ENCODE measurements at regions of chr11 and their contacts with region 1.

Region 1: GRCh38 chr11:116835791-116836631 is 1.4 kb downstream of the APOA1 start:
- DNase-seq: peak; percentile 69 to 92 (median 78)
- ATAC-seq: peak; percentile 97
- H3K4me3 ChIP-seq: peak overlapping the region; percentile 63
- H3K4me3 Mint-ChIP-seq: peak overlapping the region; percentile 84
- H3K27ac ChIP-seq: no peak overlapping the region
- H3K27ac Mint-ChIP-seq: peak overlapping the region; percentile 58
- H3K4me1 ChIP-seq: peaks cover 18% of the 10 kb centered on the region
- H3K4me1 Mint-ChIP-seq: peaks cover 12% of the 10 kb centered on the region
- H3K27me3 ChIP-seq: no peaks in the 10 kb centered on the region
- H3K27me3 Mint-ChIP-seq: no peaks in the 10 kb centered on the region
- CTCF ChIP-seq: peak; percentile 70

Region 2: DNA sequence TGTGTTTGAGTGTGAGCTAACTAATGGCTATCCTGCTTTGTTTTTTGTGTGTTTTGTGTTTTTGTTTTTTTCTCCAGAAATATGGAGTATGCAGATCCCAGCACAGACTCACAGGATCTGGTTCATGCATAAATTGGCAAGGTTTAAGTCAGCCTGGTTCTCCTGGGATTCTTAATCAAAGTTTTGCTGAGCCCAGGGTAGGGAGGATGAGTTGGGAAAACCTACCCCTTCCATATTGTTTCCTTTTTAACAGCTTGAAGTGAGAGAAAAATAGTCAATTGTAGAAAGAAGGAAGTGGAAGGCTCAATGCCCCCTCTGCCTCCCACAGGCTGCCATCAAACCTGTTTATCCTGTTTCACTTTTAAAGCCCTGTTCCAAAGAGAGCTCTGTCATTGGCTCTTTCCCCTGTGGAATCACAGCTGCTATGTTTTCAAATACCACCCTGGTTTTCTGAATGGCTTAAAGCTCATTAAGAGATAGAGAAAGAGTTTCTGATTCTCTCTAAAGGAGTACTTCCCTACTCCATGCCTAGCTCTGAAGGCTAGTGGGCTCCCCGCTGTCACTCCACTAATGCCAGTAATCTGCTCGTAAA is 1308.4 kb before region 1 on chr11:
- CTCF ChIA-PET with region 1: no interaction called
- POLR2A ChIA-PET with region 1: no interaction called
- intact Hi-C with region 1: no loop called
- DNase-seq: no peak
- ATAC-seq: no peak
- H3K4me3 ChIP-seq: no peak overlapping the region
- H3K4me3 Mint-ChIP-seq: no peak overlapping the region
- H3K27ac ChIP-seq: no peak overlapping the region
- H3K27ac Mint-ChIP-seq: no peak overlapping the region
- H3K4me1 ChIP-seq: no peaks in the 10 kb centered on the region
- H3K4me1 Mint-ChIP-seq: no peaks in the 10 kb centered on the region
- H3K27me3 ChIP-seq: no peaks in the 10 kb centered on the region
- H3K27me3 Mint-ChIP-seq: peaks cover 34% of the 10 kb centered on the region
- CTCF ChIP-seq: no peak

Region 3: DNA sequence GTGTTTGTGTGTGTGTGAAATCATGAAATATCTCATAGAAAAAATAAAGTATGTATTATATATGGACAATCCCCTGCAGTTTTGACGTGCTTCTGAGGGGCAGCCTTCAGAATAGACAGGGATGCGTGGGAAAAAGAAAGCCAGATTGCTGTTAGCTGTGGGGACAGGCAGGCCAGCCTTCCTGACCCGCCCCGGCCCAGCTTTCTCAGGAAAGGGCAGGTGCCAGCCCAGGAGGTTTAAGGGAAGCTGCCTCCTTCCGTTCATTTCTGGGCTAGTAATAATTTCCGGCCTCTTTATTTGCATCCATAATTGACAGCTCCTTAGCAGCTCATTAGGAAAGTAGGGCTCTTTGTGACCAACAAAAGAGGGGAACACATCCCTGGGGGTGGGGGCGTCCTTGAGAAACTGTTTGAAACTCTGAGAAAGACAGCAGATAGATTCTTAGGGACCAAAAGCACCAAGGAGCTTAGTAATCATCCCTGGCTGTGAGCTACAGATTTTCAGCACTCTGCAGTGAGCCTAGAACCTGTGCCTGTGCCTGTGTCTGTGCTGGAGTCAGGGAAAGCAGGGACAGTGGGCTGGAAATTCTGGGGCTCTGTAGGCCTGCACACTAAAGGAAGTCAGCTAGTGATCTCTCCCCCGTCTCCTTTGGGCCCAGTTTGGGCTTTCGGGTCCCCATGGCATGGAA is 698.9 kb before region 1 on chr11:
- CTCF ChIA-PET with region 1: no interaction called
- POLR2A ChIA-PET with region 1: no interaction called
- intact Hi-C with region 1: no loop called
- DNase-seq: no peak
- ATAC-seq: no peak
- H3K4me3 ChIP-seq: no peak overlapping the region
- H3K4me3 Mint-ChIP-seq: no peak overlapping the region
- H3K27ac ChIP-seq: no peak overlapping the region
- H3K27ac Mint-ChIP-seq: no peak overlapping the region
- H3K4me1 ChIP-seq: no peaks in the 10 kb centered on the region
- H3K4me1 Mint-ChIP-seq: no peaks in the 10 kb centered on the region
- H3K27me3 ChIP-seq: peaks cover 0 to 2% of the 10 kb centered on the region in 2 experiments
- H3K27me3 Mint-ChIP-seq: peaks cover 37% of the 10 kb centered on the region
- CTCF ChIP-seq: no peak

Region 4: DNA sequence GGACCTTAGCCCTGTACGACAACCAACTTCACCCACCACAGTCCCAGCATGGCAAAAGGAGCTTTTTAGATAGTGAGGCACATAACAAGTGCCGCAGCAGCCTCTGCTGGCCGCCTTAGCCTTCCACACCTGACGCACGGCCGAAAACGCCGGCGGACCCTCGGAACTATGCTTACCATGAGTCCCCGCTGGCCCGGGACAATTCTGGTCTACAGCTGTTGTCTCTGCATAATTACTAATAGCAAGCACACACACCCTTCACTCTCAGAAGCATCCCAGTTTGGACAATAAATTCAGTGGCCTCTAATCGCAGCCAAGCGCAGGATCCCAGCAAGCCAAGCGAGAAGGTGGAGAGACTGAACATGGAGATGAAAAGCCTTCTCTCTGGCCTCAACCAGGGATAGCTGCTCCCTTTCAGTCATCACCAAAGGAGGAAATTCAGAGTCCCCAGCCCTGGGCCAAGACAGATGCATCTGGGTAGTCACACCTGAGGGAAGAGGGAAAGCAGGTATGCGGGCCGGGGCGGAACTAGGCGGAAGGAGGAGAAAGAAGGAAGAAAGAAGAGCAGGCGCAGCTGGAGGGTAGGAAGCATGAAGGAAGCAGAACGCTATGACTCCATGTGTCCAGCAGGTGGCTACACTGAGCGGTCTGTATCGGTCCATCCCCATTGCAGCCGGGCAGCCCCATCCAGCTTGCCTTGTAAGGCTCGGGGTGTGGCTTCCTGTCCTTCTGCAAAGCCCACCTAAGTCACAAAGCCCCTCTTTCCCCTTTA is 103.6 kb before region 1 on chr11:
- CTCF ChIA-PET with region 1: interaction called, 6 read pairs
- POLR2A ChIA-PET with region 1: interaction called, 4 read pairs
- intact Hi-C with region 1: loop called in 1 of 2 experiments (anchors 5 kb)
- DNase-seq: peak; percentile 33 to 76 (median 45)
- ATAC-seq: peak; percentile 95
- H3K4me3 ChIP-seq: no peak overlapping the region
- H3K4me3 Mint-ChIP-seq: no peak overlapping the region
- H3K27ac ChIP-seq: no peak overlapping the region
- H3K27ac Mint-ChIP-seq: no peak overlapping the region
- H3K4me1 ChIP-seq: peaks cover 7% of the 10 kb centered on the region
- H3K4me1 Mint-ChIP-seq: peaks cover 7% of the 10 kb centered on the region
- H3K27me3 ChIP-seq: peaks cover 0 to 2% of the 10 kb centered on the region in 2 experiments
- H3K27me3 Mint-ChIP-seq: no peaks in the 10 kb centered on the region
- CTCF ChIP-seq: peak; percentile 83

Region 5: GRCh38 chr11:116772443-116773202 is 63.4 kb before region 1 on chr11 and contains the start of gene BUD13:
- CTCF ChIA-PET with region 1: interaction called, 5 read pairs
- POLR2A ChIA-PET with region 1: interaction called, 13 read pairs
- intact Hi-C with region 1: no loop called
- DNase-seq: peak; percentile 90 to 96 (median 94)
- ATAC-seq: peak; percentile 92
- H3K4me3 ChIP-seq: peak within 1 kb of the TSS; percentile 92
- H3K4me3 Mint-ChIP-seq: peak within 1 kb of the TSS; percentile 99
- H3K27ac ChIP-seq: peak within 1 kb of the TSS; percentile 87 to 90
- H3K27ac Mint-ChIP-seq: peak within 1 kb of the TSS; percentile 95
- H3K4me1 ChIP-seq: peaks cover 23% of the 10 kb centered on the region
- H3K4me1 Mint-ChIP-seq: peaks cover 45% of the 10 kb centered on the region
- H3K27me3 ChIP-seq: no peaks in the 10 kb centered on the region
- H3K27me3 Mint-ChIP-seq: no peaks in the 10 kb centered on the region
- CTCF ChIP-seq: peak; percentile 16
- total RNA-seq, gene BUD13: 9.2 to 10.1 TPM

Region 6: GRCh38 chr11:116853461-116854073 is 17.6 kb after region 1 on chr11:
- CTCF ChIA-PET with region 1: interaction called, 9 read pairs
- POLR2A ChIA-PET with region 1: interaction called, 76 read pairs
- intact Hi-C with region 1: loop called in 1 of 2 experiments (anchors 2 kb)
- DNase-seq: peak in 12 of 14 experiments; percentile 15 to 93 (median 52)
- ATAC-seq: peak; percentile 95
- H3K4me3 ChIP-seq: peak overlapping the region; percentile 13
- H3K4me3 Mint-ChIP-seq: peak overlapping the region; percentile 18
- H3K27ac ChIP-seq: peak overlapping the region; percentile 69 to 82
- H3K27ac Mint-ChIP-seq: peak overlapping the region; percentile 82
- H3K4me1 ChIP-seq: peaks cover 68% of the 10 kb centered on the region
- H3K4me1 Mint-ChIP-seq: peaks cover 74% of the 10 kb centered on the region
- H3K27me3 ChIP-seq: no peaks in the 10 kb centered on the region
- H3K27me3 Mint-ChIP-seq: no peaks in the 10 kb centered on the region
- CTCF ChIP-seq: no peak

Region 7: DNA sequence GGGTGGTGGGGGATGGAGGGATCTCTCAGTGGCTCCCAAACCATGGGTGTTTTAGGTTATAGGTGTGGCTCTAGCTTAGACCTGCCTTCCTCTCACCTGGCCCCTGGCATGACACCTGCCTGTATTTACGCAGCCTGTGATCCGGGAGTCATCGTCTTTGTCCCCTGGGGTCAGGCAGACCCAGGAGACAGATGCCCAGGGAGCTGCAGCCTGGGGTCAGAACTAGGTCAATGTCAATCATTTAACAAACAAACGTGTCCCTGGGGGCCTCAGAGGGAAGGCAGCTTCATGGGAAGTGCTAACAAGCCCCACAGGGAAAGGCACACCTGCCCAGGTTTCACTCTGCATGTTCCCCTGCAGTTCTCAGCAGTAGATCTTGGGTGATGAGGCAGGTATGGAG is 467.1 kb after region 1 on chr11:
- CTCF ChIA-PET with region 1: no interaction called
- POLR2A ChIA-PET with region 1: no interaction called
- intact Hi-C with region 1: no loop called
- DNase-seq: no peak
- ATAC-seq: no peak
- H3K4me3 ChIP-seq: no peak overlapping the region
- H3K4me3 Mint-ChIP-seq: no peak overlapping the region
- H3K27ac ChIP-seq: no peak overlapping the region
- H3K27ac Mint-ChIP-seq: no peak overlapping the region
- H3K4me1 ChIP-seq: no peaks in the 10 kb centered on the region
- H3K4me1 Mint-ChIP-seq: no peaks in the 10 kb centered on the region
- H3K27me3 ChIP-seq: no peaks in the 10 kb centered on the region
- H3K27me3 Mint-ChIP-seq: peaks cover 1% of the 10 kb centered on the region
- CTCF ChIP-seq: no peak